Activated naive CD8-positive, alpha-beta T cell treated with anti-CD3 and anti-CD28 coated beads, Interleukin-2, amount 10 ng/mL, durations not matched to agents 7 days and 5 days (primary cell): ENCODE measurements at regions of chr9 and their contacts with region 1.

Region 1: GRCh38 chr9:20622330-20623020 is at the start of gene MLLT3:
- DNase-seq: peak; percentile 97
- ATAC-seq: peak; percentile 84
- H3K4me3 Mint-ChIP-seq: peak within 1 kb of the TSS; percentile 95
- H3K27ac Mint-ChIP-seq: peak within 1 kb of the TSS; percentile 97
- H3K4me1 Mint-ChIP-seq: peaks cover 30% of the 10 kb centered on the region
- H3K27me3 Mint-ChIP-seq: no peaks in the 10 kb centered on the region
- total RNA-seq, gene MLLT3: 112 TPM

Region 2: GRCh38 chr9:19925817-19926503 is 696.5 kb before region 1 on chr9:
- POLR2A ChIA-PET with region 1: interaction called, 11 read pairs
- DNase-seq: peak; percentile 73
- ATAC-seq: peak; percentile 91
- H3K4me3 Mint-ChIP-seq: peak overlapping the region; percentile 64
- H3K27ac Mint-ChIP-seq: peak overlapping the region; percentile 85
- H3K4me1 Mint-ChIP-seq: peaks cover 33% of the 10 kb centered on the region
- H3K27me3 Mint-ChIP-seq: peaks cover 5% of the 10 kb centered on the region

Region 3: GRCh38 chr9:20242510-20243189 is 379.8 kb before region 1 on chr9:
- POLR2A ChIA-PET with region 1: interaction called, 16 read pairs
- DNase-seq: peak; percentile 43
- ATAC-seq: peak; percentile 84
- H3K4me3 Mint-ChIP-seq: peak overlapping the region; percentile 14
- H3K27ac Mint-ChIP-seq: peak overlapping the region; percentile 80
- H3K4me1 Mint-ChIP-seq: peaks cover 76% of the 10 kb centered on the region
- H3K27me3 Mint-ChIP-seq: no peaks in the 10 kb centered on the region

Region 4: DNA sequence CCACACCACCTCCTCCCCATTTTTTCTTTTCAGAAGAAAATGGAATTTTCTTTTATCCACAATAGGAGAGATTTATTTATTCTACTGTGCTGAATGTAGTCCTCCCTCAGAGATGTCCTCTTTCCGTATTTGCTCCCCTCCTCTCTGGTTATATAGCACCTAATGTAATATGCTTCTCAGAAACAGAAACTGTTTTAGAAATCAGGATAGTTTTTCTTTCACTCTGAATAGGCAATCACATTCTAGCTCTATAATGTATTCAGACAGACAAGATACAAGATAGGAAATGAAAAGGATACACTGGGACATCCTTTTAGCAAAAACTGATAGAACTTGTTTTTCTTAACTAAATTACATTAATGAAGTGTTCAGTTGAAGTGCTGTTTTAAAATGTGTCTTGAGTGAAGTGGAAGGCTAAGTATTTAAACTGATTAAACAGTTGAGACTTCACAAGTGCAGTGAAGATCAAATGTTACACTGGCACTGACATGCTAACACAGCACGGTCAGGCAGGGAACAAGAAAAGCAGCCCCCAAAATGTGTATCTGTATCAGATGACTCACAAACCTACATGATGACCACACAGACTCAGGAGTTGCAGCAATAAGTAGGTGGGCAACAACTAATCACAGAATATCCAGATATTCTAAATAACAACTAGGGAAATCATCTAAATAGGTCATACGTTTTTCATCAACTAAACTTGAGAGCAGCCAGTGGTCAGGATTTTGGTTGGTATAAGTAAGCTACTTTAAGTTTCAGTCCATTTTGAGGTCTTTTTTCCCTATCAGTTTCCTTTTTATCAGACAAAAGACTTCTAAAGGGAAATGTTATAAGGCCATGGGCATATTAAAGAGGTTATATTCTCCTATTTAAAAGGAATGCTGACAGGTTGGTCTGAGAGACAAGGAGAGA is 260.6 kb before region 1 on chr9:
- POLR2A ChIA-PET with region 1: interaction called, 15 read pairs
- DNase-seq: no peak
- ATAC-seq: peak; percentile 89
- H3K4me3 Mint-ChIP-seq: peak overlapping the region; percentile 54
- H3K27ac Mint-ChIP-seq: peak overlapping the region; percentile 90
- H3K4me1 Mint-ChIP-seq: peaks cover 64% of the 10 kb centered on the region
- H3K27me3 Mint-ChIP-seq: no peaks in the 10 kb centered on the region

Region 5: GRCh38 chr9:20552874-20553575 is 69.5 kb before region 1 on chr9:
- POLR2A ChIA-PET with region 1: interaction called, 11 read pairs
- DNase-seq: no peak
- ATAC-seq: peak; percentile 55
- H3K4me3 Mint-ChIP-seq: peak overlapping the region; percentile 71
- H3K27ac Mint-ChIP-seq: peak overlapping the region; percentile 84
- H3K4me1 Mint-ChIP-seq: peaks cover 66% of the 10 kb centered on the region
- H3K27me3 Mint-ChIP-seq: no peaks in the 10 kb centered on the region

Region 6: DNA sequence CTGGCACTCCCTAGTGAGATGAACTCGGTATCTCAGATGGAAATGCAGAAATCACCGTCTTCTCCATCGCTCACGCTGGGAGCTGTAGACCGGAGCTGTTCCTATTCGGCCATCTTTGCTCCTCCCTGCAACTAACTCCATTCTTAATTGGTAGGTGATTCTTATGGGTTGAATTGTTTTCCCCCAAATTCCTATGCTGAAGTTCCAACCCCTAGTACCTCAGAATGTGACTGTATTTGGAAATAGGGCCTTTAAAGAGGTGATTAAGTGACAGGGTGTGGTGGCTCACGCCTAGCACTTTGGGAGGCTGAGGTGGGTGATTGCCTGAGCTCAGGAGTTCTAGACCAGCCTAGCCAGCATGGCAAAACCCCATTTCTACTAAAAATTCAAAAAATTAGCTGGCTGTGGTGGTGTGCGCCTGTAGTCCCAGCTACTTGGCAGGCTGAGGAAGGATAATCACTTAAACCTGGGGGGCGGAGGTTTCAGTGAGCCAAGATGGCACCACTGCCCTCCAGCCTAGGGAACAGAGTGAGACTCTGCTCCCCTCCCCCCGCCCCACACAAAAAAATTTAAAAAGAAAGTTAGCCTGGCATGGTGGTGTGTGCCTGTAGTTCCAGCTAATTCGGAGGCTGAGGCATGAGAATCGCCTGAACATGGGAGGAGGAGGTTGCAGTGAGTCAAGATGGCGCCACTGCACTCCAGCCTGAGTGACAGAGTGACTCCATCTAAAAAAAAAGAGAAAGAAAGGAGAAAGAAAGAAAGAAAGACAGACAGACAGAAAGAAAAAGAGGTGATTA is 36.4 kb after region 1 on chr9:
- POLR2A ChIA-PET with region 1: interaction called, 13 read pairs
- DNase-seq: no peak
- ATAC-seq: no peak
- H3K4me3 Mint-ChIP-seq: no peak overlapping the region
- H3K27ac Mint-ChIP-seq: peak overlapping the region; percentile 81
- H3K4me1 Mint-ChIP-seq: peaks cover 3% of the 10 kb centered on the region
- H3K27me3 Mint-ChIP-seq: no peaks in the 10 kb centered on the region

Region 7: DNA sequence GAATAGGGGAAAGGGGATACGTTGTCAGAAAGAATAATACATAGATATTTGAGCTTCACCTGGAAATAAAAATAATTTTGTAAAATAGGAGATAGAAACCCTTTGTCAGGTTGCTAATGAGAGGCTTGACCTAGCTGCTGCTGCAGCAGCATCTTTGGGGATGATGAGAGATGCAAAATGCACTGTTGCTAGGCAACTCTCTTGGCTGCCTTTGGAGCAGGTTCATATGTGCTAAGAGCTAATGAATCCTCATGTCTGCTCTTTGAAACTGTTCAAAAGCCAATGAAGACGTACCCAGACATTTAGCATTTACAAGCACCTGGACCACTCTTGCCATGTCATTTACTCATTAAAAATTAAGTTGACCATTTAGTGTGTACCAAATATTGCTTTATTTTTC is 183.3 kb after region 1 on chr9:
- POLR2A ChIA-PET with region 1: no interaction called
- DNase-seq: no peak
- ATAC-seq: no peak
- H3K4me3 Mint-ChIP-seq: no peak overlapping the region
- H3K27ac Mint-ChIP-seq: no peak overlapping the region
- H3K4me1 Mint-ChIP-seq: no peaks in the 10 kb centered on the region
- H3K27me3 Mint-ChIP-seq: no peaks in the 10 kb centered on the region

Region 8: DNA sequence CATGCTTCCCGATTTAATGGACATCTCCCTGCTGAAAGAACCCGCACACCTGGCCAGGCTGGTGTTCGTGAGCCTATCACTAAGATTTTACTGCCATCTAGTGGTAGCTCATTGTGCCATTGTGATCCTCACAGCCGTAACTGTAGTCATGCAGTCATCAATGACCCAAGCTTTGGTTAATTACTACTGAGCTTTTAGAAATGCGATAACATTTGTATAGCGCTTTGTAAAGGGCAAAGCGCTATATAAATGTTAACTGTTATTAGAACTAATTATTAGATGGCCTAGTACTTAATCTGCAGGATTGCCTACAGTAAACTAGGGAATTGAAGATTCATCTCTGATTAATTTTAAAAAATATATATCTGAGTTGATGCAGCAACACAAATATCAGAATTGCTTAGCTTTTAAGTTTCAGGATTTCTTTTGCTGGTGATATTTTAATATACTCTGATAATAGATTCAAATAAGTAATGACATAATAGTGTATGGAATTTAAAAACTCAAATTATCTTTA is 318.8 kb after region 1 on chr9:
- POLR2A ChIA-PET with region 1: interaction called, 10 read pairs
- DNase-seq: peak; percentile 41
- ATAC-seq: peak; percentile 97
- H3K4me3 Mint-ChIP-seq: peak overlapping the region; percentile 17
- H3K27ac Mint-ChIP-seq: peak overlapping the region; percentile 54
- H3K4me1 Mint-ChIP-seq: peaks cover 8% of the 10 kb centered on the region
- H3K27me3 Mint-ChIP-seq: no peaks in the 10 kb centered on the region